IMR-90 (cell line): ENCODE measurements at regions of chr2 and their contacts with region 1.

Region 1: DNA sequence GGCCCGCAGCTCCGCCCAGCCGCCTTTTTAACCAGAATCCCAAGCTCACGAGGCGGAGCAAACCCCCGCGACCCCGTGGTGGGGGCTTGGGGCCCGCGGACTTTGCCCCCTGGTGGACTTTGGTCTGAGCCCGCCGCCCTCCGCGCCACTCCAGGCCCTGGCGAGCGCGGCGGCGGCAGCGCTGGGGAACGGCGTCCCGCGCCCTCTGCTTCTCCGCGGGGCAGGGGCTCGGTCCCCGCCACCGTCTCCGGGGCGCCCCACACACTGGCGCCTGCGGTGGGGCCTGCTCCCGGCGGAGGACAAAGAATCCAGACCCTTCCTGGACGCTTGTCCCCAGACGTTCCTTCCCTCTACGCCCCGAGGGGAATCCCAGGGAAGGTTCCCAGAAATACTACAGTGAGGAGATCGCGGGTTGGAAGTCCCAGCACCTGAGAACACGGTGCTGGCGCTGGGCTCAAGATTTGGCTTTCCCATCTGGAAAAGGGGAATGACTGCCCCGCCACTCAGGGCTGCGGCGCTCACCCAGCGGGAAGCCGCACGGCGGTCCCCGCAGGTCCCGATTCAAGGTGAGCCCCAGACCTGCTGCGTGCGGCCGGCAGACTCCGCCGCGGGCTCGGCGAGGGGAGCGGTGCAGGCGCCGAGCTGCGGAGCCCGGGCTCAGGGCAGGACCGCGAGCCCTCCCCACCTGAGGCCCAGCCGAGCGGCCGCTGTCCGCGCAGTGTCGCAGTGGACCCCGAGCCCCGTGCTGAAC is at the start of gene HAAO:
- DNase-seq: no peak
- ATAC-seq: 0 out of 2 replicates have a peak, but pooled peaks have one; percentile 5
- H3K4me3 ChIP-seq: no peak within 1 kb of the TSS; the same call in 1 of the 2 replicates
- H3K27ac ChIP-seq: no peak within 1 kb of the TSS
- H3K4me1 ChIP-seq: peaks cover 6% of the 10 kb centered on the region
- H3K27me3 ChIP-seq: peaks cover 28% of the 10 kb centered on the region
- CTCF ChIP-seq: no peak
- POLR2A ChIP-seq: no peak
- RAD21 ChIP-seq: no peak
- total RNA-seq, gene HAAO: 0.18 TPM in 1 of 2 replicates, not detected in the other

Region 2: GRCh38 chr2:42303252-42303651 is 489.5 kb before region 1 on chr2:
- CTCF ChIA-PET with region 1: no interaction called
- POLR2A ChIA-PET with region 1: no interaction called
- dilution Hi-C with region 1: no loop called
- in situ Hi-C with region 1: no loop called
- intact Hi-C with region 1: no loop called
- DNase-seq: no peak
- ATAC-seq: peak; percentile 42; the same call in 1 of the 2 replicates
- H3K4me3 ChIP-seq: no peak overlapping the region
- H3K27ac ChIP-seq: no peak overlapping the region
- H3K4me1 ChIP-seq: no peaks in the 10 kb centered on the region
- H3K27me3 ChIP-seq: no peaks in the 10 kb centered on the region
- CTCF ChIP-seq: no peak
- POLR2A ChIP-seq: no peak
- RAD21 ChIP-seq: no peak

Region 3: GRCh38 chr2:42854207-42854818 is 61.6 kb after region 1 on chr2:
- CTCF ChIA-PET with region 1: no interaction called
- POLR2A ChIA-PET with region 1: no interaction called
- dilution Hi-C with region 1: no loop called
- in situ Hi-C with region 1: no loop called
- intact Hi-C with region 1: no loop called
- DNase-seq: peak; percentile 23
- ATAC-seq: peak; percentile 78
- H3K4me3 ChIP-seq: no peak overlapping the region
- H3K27ac ChIP-seq: peak overlapping the region; percentile 14; the same call in 1 of the 2 replicates
- H3K4me1 ChIP-seq: peaks cover 7% of the 10 kb centered on the region; the same call in 1 of the 2 replicates
- H3K27me3 ChIP-seq: no peaks in the 10 kb centered on the region
- CTCF ChIP-seq: no peak
- POLR2A ChIP-seq: no peak
- RAD21 ChIP-seq: no peak

Region 4: GRCh38 chr2:43648994-43649701 is 856.4 kb after region 1 on chr2:
- CTCF ChIA-PET with region 1: no interaction called
- POLR2A ChIA-PET with region 1: interaction called, 13 read pairs
- dilution Hi-C with region 1: no loop called
- in situ Hi-C with region 1: no loop called
- intact Hi-C with region 1: no loop called
- DNase-seq: peak; percentile 69
- ATAC-seq: peak; percentile 92
- H3K4me3 ChIP-seq: no peak overlapping the region
- H3K27ac ChIP-seq: peak overlapping the region; percentile 66; the same call in 1 of the 2 replicates
- H3K4me1 ChIP-seq: peaks cover 5% of the 10 kb centered on the region
- H3K27me3 ChIP-seq: no peaks in the 10 kb centered on the region; the same call in 1 of the 2 replicates
- CTCF ChIP-seq: no peak
- POLR2A ChIP-seq: no peak
- RAD21 ChIP-seq: no peak